Mucosa of descending colon (tissue), 3 donors: ENCODE measurements at regions of chr17 and their contacts with region 1.

Region 1: DNA sequence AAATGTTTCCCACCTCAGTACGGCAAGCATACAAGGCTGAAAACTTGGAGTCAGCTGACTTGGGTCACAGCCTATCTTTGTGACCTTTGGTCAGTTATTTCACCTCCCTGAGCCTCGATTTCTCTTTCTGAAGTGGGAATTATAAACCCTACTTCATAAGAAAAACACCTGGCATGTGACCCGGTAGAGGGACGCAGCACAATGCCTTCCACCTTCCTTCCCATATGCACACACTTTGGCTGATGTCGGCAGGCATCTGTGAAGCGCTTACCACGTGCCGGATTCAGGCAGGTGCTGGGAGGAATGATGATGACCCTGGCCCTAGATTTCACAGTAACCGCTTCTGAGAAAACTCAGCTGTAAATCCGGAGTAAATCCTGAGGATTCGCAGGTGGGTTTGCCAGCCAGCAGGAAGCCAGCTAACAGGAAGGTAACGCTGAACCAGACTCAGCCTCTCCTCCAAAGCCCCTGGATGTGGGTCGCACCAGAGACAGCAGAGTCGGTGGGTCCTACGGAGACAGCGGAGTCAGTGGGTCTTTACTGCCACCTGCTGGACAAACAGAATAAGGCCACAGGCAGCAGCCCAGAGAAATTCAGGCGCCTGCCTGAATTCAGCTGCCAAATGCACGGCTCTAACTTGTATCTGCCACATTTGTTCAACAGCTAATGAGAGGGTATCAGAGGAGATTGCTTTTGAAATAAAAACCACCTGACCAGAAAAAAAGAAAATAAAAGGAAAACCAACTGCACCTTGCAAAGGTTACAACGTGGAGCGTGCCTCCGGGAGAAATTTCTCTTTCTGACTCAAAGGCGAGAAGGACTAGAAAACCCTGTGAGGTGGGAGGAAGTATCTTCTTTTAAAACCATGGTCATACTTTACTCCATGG is 16.6 kb downstream of the COPRS start:
- DNase-seq: peak; percentile 61 to 83 (median 71)
- ATAC-seq: peak; percentile 94
- H3K4me3 ChIP-seq: no peak overlapping the region
- H3K4me1 ChIP-seq: peaks cover 6% of the 10 kb centered on the region
- CTCF ChIP-seq: peak; percentile 89

Region 2: GRCh38 chr17:31437720-31438420 is 404.6 kb before region 1 on chr17:
- intact Hi-C with region 1: loop called in 1 of 2 experiments (anchors 5 kb)
- DNase-seq: peak in 1 of 3 donors; percentile 29
- ATAC-seq: peak; percentile 5
- H3K4me3 ChIP-seq: no peak overlapping the region
- H3K4me1 ChIP-seq: no peaks in the 10 kb centered on the region
- CTCF ChIP-seq: no peak

Region 3: GRCh38 chr17:31549525-31550388 is 292.7 kb before region 1 on chr17:
- intact Hi-C with region 1: loop called in 1 of 2 experiments (anchors 10 kb)
- DNase-seq: peak; percentile 93 to 97 (median 95)
- ATAC-seq: peak; percentile 95
- H3K4me3 ChIP-seq: peak overlapping the region; percentile 84
- H3K4me1 ChIP-seq: peaks cover 5% of the 10 kb centered on the region
- CTCF ChIP-seq: no peak

Region 4: GRCh38 chr17:31558748-31559644 is 283.4 kb before region 1 on chr17:
- intact Hi-C with region 1: loop called (anchors 5 to 10 kb)
- DNase-seq: peak; percentile 77 to 88 (median 81)
- ATAC-seq: peak; percentile 93
- H3K4me3 ChIP-seq: peak overlapping the region; percentile 26
- H3K4me1 ChIP-seq: peaks cover 27% of the 10 kb centered on the region
- CTCF ChIP-seq: peak; percentile 77

Region 5: GRCh38 chr17:32253117-32253611 is 410.7 kb after region 1 on chr17:
- intact Hi-C with region 1: no loop called
- DNase-seq: peak in 2 of 3 donors; percentile 79 to 89
- ATAC-seq: peak; percentile 95
- H3K4me3 ChIP-seq: no peak overlapping the region
- H3K4me1 ChIP-seq: peaks cover 6% of the 10 kb centered on the region
- CTCF ChIP-seq: peak; percentile 92